ENCODE measurements at regions of chr18 and their contacts with region 1.

Region 1: DNA sequence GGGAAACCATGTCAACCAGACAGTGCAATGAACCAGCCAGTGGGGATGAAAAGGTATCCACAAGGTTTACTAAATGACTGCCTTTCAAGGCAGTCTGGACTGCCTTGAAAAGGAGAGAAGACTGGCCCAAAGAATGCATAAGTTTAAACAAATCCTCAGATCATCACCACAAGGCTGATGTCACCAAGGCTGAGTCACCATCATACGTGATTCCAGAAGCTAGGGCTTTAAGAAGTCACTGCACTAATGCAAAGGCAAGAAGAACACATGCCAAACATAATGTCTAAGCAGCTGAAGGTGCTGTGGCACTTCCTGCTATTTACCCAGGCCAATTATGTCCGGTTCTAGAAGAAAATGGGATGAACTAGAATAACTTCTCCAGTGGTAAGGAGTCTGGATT is 37.7 kb upstream of the ONECUT2 start:
- DNase-seq: no peak
- ATAC-seq: no peak
- H3K4me3 ChIP-seq: no peak overlapping the region
- H3K4me3 Mint-ChIP-seq: no peak overlapping the region
- H3K27ac ChIP-seq: no peak overlapping the region
- H3K27ac Mint-ChIP-seq: no peak overlapping the region
- H3K4me1 ChIP-seq: no peaks in the 10 kb centered on the region
- H3K4me1 Mint-ChIP-seq: no peaks in the 10 kb centered on the region
- H3K27me3 ChIP-seq: no peaks in the 10 kb centered on the region
- H3K27me3 Mint-ChIP-seq: peaks cover 5% of the 10 kb centered on the region
- CTCF ChIP-seq: no peak

Region 2: DNA sequence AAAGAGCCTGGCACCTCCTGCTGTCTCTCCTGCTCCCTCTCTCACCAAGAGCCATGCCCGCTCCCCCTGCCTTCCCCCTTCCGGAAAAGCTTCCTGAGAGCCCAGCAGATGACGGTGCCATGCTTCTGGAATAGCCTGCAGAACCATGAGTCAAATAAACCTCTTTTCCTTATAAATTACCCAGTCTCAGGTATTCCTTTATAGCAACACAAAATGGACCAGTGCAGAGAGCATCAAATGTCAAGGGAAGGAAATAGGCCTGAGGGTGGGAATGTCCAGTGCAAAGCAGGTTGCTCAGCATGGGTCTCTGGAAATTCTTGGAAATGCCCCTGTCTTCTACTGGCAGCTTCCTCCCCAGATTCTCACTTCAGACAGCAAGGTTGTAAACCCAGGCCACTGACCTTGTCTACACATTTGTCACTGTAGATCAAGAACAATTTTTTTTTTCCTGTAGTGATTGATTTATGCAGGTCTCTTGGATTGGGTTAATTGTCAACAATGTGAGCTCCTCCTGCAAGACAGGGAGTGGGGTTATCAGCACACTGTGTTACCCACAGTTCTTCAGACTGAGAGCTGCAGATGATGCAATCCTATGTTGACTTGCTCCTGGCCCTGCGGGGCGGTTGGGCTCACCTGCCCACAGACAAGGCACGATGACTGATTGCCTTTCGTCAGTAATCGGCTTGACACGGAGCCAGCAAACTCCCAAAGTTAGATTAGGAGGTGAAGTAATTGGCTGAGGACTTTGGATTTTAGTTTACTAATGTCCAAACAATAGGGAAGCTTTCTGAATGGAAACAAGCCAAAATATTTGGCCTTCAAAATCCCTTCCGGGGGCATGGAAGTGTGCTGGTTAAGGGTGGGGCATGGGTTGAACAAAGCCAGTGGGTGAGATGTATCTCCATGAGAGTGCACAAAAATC is 256.0 kb before region 1 on chr18:
- CTCF ChIA-PET with region 1: no interaction called
- POLR2A ChIA-PET with region 1: no interaction called
- intact Hi-C with region 1: no loop called
- DNase-seq: no peak
- ATAC-seq: no peak
- H3K4me3 ChIP-seq: no peak overlapping the region
- H3K4me3 Mint-ChIP-seq: no peak overlapping the region
- H3K27ac ChIP-seq: no peak overlapping the region
- H3K27ac Mint-ChIP-seq: no peak overlapping the region
- H3K4me1 ChIP-seq: no peaks in the 10 kb centered on the region
- H3K4me1 Mint-ChIP-seq: no peaks in the 10 kb centered on the region
- H3K27me3 ChIP-seq: no peaks in the 10 kb centered on the region
- H3K27me3 Mint-ChIP-seq: peaks cover 5% of the 10 kb centered on the region
- CTCF ChIP-seq: no peak

Region 3: DNA sequence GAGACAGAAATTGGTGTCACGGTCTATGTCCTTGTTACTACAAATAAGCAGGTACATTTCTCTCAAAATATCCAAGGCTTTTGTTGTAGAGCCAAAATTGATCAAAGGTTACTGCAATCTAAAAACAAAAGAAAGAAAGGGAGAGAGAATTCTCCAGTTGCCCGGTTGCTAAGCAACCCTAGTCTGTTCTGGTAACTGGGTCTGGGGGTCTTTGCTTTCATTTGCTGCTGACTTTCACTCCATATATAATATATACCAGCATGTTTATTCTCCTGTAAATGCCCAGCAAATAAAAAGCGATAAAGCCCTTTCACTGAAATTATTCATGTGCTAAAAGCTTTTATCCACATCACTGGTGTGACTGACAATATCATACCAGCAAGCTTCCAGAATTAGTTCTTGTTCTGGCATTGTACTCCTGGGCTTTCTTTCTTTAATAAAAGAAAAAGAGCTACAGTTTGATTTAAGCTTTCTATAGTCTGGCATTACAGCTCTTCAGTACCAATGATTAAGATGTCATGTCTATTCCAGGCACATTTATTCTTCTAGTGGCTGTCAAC is 120.6 kb before region 1 on chr18:
- CTCF ChIA-PET with region 1: no interaction called
- POLR2A ChIA-PET with region 1: no interaction called
- intact Hi-C with region 1: no loop called
- DNase-seq: no peak
- ATAC-seq: no peak
- H3K4me3 ChIP-seq: no peak overlapping the region
- H3K4me3 Mint-ChIP-seq: no peak overlapping the region
- H3K27ac ChIP-seq: no peak overlapping the region
- H3K27ac Mint-ChIP-seq: no peak overlapping the region
- H3K4me1 ChIP-seq: no peaks in the 10 kb centered on the region
- H3K4me1 Mint-ChIP-seq: no peaks in the 10 kb centered on the region
- H3K27me3 ChIP-seq: no peaks in the 10 kb centered on the region
- H3K27me3 Mint-ChIP-seq: no peaks in the 10 kb centered on the region
- CTCF ChIP-seq: no peak

Region 4: GRCh38 chr18:57437766-57438671 is 40.6 kb after region 1 on chr18:
- CTCF ChIA-PET with region 1: no interaction called
- POLR2A ChIA-PET with region 1: no interaction called
- intact Hi-C with region 1: no loop called
- DNase-seq: peak in 2 of 9 experiments; percentile 15 to 33
- ATAC-seq: peak; percentile 49
- H3K4me3 ChIP-seq: peak overlapping the region in 1 of 2 experiments; percentile 37
- H3K4me3 Mint-ChIP-seq: peak overlapping the region; percentile 60
- H3K27ac ChIP-seq: no peak overlapping the region
- H3K27ac Mint-ChIP-seq: no peak overlapping the region
- H3K4me1 ChIP-seq: peaks cover 51% of the 10 kb centered on the region
- H3K4me1 Mint-ChIP-seq: peaks cover 46% of the 10 kb centered on the region
- H3K27me3 ChIP-seq: peaks cover 41 to 50% of the 10 kb centered on the region in 2 experiments
- H3K27me3 Mint-ChIP-seq: peaks cover 79% of the 10 kb centered on the region
- CTCF ChIP-seq: no peak

Region 5: GRCh38 chr18:57461652-57462269 is 64.3 kb after region 1 on chr18:
- CTCF ChIA-PET with region 1: no interaction called
- POLR2A ChIA-PET with region 1: no interaction called
- intact Hi-C with region 1: loop called in 1 of 2 experiments (anchors 2 kb)
- DNase-seq: no peak
- ATAC-seq: no peak
- H3K4me3 ChIP-seq: no peak overlapping the region
- H3K4me3 Mint-ChIP-seq: no peak overlapping the region
- H3K27ac ChIP-seq: no peak overlapping the region
- H3K27ac Mint-ChIP-seq: no peak overlapping the region
- H3K4me1 ChIP-seq: no peaks in the 10 kb centered on the region
- H3K4me1 Mint-ChIP-seq: no peaks in the 10 kb centered on the region
- H3K27me3 ChIP-seq: peaks cover 0 to 4% of the 10 kb centered on the region in 2 experiments
- H3K27me3 Mint-ChIP-seq: peaks cover 12% of the 10 kb centered on the region
- CTCF ChIP-seq: no peak

Region 6: DNA sequence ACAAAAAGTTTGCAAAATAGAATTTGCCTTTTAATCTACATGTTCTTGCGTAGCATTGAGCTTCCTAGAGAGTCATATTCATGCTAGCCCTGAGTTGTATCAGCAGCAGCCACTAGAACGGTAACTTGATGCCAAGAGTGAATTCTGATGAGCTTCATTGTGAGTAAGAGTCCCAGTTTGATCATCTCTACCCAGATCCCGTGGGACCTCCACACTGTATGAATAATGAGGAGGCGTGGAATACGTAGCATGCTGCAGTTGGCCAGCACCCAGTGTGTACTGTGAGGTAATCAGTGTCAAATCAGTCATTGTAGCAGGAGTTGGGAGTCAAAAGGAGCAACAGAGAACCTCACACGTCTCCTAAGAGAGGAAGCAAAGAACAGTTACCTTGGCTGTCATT is 844.4 kb after region 1 on chr18:
- CTCF ChIA-PET with region 1: no interaction called
- POLR2A ChIA-PET with region 1: no interaction called
- intact Hi-C with region 1: no loop called
- DNase-seq: no peak
- ATAC-seq: no peak
- H3K4me3 ChIP-seq: no peak overlapping the region
- H3K4me3 Mint-ChIP-seq: no peak overlapping the region
- H3K27ac ChIP-seq: no peak overlapping the region
- H3K27ac Mint-ChIP-seq: no peak overlapping the region
- H3K4me1 ChIP-seq: no peaks in the 10 kb centered on the region
- H3K4me1 Mint-ChIP-seq: no peaks in the 10 kb centered on the region
- H3K27me3 ChIP-seq: no peaks in the 10 kb centered on the region
- H3K27me3 Mint-ChIP-seq: no peaks in the 10 kb centered on the region
- CTCF ChIP-seq: no peak

Measured in CD8-positive, alpha-beta T cell (primary cell).